Posterior vena cava (tissue), 2 donors: ENCODE measurements at regions of chr16 and their contacts with region 1.

Region 1: DNA sequence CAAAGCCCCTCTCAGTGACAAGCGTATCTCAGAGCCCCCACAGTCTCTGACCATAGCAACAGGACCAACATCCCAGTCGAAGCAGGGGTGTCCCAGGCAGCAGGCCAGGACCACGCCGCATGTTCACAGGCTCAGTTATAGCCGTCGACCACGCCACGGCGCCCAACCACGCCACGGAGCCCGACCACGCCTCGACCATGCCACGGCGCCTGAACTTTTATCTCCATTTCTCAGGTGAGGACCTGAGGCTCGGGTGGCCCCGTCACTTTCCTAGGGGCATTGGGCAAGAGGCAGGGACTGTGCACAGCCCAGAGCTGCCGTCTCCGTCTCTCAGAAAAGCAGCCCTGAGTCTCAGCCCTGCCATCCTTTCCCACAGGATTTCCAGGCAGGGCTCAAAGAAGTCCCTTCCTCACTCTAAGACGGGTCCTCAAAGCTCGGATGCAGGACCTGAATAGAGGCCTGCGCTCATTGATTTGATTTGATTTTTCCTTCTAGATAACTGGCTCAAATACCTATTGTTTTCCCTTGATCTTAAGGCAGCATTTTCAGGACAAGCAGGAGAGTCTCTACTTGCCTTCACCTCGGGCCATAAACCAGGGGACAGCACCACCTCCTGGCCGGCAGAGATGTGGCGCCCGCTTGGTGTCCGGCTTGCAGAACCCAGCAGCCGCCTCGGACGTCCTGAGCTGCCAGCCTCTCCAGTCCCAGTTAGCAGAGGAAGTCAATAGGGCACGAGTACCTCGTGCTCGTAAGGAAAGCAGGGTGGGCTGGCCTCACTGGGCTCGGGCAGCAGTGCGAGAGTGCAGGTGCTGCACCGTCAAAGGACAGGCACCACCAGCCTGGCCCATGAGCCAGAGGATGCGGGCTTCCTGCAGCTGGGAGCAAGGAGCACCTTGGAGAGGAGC is 38.7 kb downstream of the C16orf95 start:
- DNase-seq: peak; percentile 93

Region 2: GRCh38 chr16:85316321-85316919 is 1962.0 kb before region 1 on chr16:
- intact Hi-C with region 1: no loop called
- DNase-seq: no peak

Region 3: DNA sequence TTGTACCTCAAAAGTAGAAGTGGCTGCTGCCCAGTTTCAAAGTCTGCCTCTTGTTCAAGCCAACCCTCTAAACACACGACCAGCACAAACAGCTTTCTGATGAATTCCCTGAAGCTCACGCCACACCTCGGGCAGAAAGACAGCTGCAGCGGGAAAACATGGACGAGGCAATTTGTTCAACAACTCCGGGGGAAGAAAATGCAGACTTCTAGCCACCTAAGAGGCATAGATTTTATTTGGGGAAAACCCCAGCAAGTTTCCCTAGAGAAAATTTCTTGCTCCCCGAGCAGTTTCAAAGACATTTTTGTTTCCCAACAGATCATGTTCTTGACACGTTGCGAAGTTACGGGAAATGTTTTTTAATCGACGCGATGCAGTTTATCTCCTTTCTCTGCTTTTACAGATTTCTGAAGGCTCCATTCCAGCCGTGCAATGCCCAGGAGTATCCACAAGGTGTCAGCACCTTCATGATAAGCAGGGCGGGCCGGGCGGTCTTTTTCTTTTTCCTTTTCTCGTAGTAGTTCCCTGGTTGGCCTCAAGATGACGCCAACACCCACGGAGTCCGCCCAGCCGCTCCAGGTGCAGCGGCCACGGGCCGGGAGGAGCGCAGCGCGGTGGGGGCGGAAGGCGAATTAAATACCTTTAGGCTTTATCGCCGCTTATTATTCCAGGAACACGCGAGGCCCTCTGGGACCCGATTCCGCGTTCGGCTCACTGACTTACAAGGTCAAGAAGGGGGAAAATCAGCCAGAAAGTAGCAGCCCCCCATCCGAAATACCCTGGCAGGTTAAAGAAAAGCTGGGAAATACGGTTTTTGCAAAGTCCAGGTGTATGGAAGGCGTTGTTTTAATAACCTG is 714.7 kb before region 1 on chr16:
- intact Hi-C with region 1: loop called (anchors 2 to 5 kb)
- DNase-seq: peak; percentile 96

Region 4: GRCh38 chr16:87062569-87063442 is 215.6 kb before region 1 on chr16:
- intact Hi-C with region 1: loop called in 1 of 2 experiments (anchors 5 kb)
- DNase-seq: peak; percentile 92

Region 5: GRCh38 chr16:87076950-87077749 is 201.3 kb before region 1 on chr16:
- intact Hi-C with region 1: loop called in 1 of 2 experiments (anchors 10 kb)
- DNase-seq: no peak

Region 6: DNA sequence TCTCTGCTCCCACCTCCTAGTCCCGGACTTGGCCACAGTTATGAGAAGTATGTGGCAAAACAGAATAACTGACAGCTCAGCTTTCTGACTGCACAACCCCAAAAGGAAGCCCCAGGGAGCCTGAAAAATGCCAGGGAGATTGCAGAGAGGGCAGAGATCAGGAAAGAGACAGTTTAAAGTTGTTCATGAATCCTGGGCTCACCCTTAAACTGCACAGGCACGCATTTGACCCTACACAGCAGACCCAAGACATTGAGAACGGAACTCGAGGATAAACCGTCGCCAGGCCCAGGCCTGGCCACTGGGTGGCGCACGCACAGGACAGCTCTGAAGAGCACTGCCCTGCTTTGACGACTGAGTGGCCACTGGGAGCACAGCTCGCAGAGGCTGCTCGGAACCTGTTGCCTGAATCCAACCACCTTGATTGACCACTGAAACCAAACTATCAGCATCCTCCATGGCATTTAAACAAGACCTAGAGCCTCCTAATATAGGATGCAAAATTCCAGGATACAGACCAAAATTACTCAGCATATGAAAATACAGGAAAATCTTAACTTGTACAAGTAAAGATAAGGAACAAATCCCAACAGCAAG is 75.3 kb before region 1 on chr16:
- intact Hi-C with region 1: loop called in 1 of 2 experiments (anchors 5 kb)
- DNase-seq: no peak